Panc1 (cell line): ENCODE measurements at regions of chr4 and their contacts with region 1.

Region 1: DNA sequence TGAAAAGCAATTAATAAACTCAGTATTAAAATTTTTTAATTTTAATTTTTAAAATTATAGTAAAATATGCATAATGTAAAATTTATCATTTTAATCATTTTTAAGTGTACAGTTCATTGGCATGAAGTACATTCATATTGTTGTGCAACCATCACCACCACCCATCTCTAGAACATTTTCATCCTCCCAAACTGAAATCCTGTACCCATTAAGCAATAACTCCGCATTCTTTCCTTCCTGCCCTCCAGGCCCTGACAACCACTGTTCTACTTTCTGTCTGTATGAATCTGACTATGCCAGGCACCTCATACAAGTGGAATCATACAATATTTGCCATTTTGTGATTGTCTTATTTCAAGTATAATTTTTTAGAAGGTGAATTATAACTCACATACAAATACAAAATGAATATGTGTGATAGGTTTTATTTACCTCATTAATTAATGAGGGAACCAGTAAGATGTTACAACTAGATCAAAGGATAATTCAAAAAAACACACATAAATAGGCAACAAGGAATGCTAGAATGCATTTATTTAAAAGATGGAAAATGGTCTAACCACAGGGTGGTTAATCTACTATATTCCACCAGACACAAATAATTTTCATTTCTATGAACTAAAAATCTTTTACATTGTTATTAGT is 13.1 kb upstream of the AFF1 start:
- DNase-seq: no peak
- ATAC-seq: no peak
- H3K4me3 ChIP-seq: no peak overlapping the region
- H3K27ac ChIP-seq: no peak overlapping the region
- H3K4me1 ChIP-seq: no peaks in the 10 kb centered on the region
- H3K27me3 ChIP-seq: no peaks in the 10 kb centered on the region
- CTCF ChIP-seq: no peak

Region 2: GRCh38 chr4:87093443-87094123 is 171.9 kb after region 1 on chr4:
- CTCF ChIA-PET with region 1: interaction called, 6 read pairs
- POLR2A ChIA-PET with region 1: no interaction called
- in situ Hi-C with region 1: no loop called
- intact Hi-C with region 1: loop called (anchors 2 kb)
- DNase-seq: peak; percentile 27
- ATAC-seq: peak; percentile 85
- H3K4me3 ChIP-seq: no peak overlapping the region
- H3K27ac ChIP-seq: no peak overlapping the region
- H3K4me1 ChIP-seq: peaks cover 3% of the 10 kb centered on the region; the same call in 1 of the 2 replicates
- H3K27me3 ChIP-seq: no peaks in the 10 kb centered on the region
- CTCF ChIP-seq: peak; percentile 74

Region 3: DNA sequence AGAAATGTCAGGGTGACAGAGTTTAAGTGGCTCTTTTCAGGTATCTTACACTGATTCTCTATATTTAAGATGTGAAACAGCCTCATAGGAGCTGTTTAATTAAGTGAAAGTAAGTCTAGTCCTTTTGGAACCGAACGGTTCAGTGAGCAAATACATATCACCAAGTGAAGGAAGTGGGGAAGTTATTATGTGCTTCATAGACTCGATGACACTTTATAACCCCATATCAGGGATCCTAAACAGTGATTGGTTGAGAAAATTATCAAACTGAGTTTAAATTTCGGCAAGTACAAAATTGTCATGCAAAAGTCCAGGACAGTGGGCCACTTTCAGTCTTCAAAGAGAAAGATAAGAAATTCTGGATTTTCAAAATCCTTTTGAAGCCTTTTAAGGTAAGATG is 686.5 kb after region 1 on chr4 and contains the start of gene DSPP:
- CTCF ChIA-PET with region 1: no interaction called
- POLR2A ChIA-PET with region 1: no interaction called
- in situ Hi-C with region 1: no loop called
- intact Hi-C with region 1: no loop called
- DNase-seq: no peak
- ATAC-seq: no peak
- H3K4me3 ChIP-seq: no peak within 1 kb of the TSS
- H3K27ac ChIP-seq: no peak within 1 kb of the TSS
- H3K4me1 ChIP-seq: no peaks in the 10 kb centered on the region
- H3K27me3 ChIP-seq: no peaks in the 10 kb centered on the region; the same call in 1 of the 2 replicates
- CTCF ChIP-seq: no peak
- total RNA-seq, gene DSPP: not detected